Posterior vena cava (tissue), 2 donors: ENCODE measurements at regions of chr10 and their contacts with region 1.

Region 1: DNA sequence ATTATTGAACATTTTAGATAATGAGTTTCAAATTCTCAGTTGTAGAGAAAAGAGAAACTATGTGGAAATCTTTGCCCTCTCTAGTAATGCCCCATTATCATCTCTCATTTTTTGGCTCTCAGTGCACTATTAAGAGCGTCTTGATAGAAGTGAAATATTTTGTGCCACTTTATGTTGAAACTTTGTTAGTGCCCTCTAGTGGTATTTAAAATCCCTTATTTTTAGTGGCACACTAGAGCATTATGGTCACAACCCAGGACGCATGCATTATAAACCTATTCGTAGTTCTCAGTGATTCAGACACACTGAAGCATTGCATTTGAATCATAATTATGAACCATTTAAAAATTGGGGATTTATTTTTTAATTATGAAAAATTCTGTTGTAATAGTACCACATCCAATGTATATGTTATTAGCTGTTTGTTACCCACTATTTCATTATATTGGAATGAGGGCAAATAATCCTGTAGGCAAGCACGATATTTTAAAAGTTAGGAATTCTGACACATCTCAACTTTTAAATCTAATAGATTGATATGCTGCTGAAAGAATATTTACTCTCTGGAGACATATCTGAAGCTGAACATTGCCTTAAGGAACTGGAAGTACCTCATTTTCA is 21.9 kb downstream of the PDCD4 start:
- DNase-seq: no peak

Region 2: GRCh38 chr10:110746254-110746826 is 147.3 kb before region 1 on chr10:
- intact Hi-C with region 1: loop called (anchors 10 kb)
- DNase-seq: no peak

Region 3: DNA sequence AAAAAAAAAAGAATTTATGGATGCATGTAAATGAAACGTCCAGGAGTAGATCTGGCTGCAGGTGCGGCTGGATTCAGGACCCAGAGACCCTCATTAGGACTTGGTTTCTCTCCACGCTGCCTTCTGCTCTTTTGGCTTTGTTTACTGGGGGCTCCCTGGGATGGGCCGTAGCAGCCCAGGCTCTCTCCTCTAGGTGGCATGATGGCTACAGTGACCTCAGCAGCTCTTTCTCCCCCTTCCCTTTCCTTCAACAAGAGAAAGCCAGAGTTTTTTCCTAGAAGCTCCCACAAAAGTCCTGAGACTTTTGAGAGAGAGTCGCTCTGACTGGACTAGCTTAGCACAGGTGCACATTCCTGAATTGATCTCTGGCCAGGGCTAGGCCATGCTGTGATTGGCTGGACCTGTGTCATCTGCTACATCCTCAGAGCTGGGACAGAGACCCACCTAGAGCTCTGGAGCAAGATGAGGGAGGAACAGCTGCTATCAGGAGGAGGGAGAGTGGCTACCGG is 89.8 kb before region 1 on chr10:
- intact Hi-C with region 1: loop called (anchors 5 kb)
- DNase-seq: no peak

Region 4: GRCh38 chr10:110852255-110852896 is 41.3 kb before region 1 on chr10:
- intact Hi-C with region 1: no loop called
- DNase-seq: no peak